KBM-7 (cell line): ENCODE measurements at regions of chr17 and their contacts with region 1.

Region 1: DNA sequence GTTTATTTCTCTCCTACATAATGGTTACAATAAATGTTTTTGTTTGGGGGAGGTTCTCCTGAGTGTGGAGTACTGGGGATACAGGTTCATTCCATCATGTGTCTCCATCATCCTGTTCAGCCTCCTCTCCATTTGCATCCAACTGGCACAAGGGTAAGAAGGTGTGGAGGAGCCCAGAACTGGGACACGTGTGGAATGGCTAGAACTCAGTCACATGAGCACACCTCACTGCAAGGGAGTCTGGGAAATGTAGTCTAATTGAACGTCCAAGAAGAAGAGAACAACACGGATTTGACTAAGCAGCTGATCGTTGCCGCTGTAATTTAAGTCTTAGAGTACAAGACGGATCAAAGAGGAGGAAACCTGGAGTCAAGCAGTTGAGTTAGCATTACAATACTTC is 6.1 kb downstream of the OR1A1 start:
- DNase-seq: no peak

Region 2: GRCh38 chr17:2909175-2909845 is 304.3 kb before region 1 on chr17:
- in situ Hi-C with region 1: no loop called
- DNase-seq: no peak

Region 3: GRCh38 chr17:3127451-3127850 is 86.1 kb before region 1 on chr17 and contains the start of gene OR1G1:
- in situ Hi-C with region 1: no loop called
- DNase-seq: no peak

Region 4: GRCh38 chr17:3318336-3318735 is 104.7 kb after region 1 on chr17:
- in situ Hi-C with region 1: loop called (anchors 25 kb)
- DNase-seq: no peak

Region 5: DNA sequence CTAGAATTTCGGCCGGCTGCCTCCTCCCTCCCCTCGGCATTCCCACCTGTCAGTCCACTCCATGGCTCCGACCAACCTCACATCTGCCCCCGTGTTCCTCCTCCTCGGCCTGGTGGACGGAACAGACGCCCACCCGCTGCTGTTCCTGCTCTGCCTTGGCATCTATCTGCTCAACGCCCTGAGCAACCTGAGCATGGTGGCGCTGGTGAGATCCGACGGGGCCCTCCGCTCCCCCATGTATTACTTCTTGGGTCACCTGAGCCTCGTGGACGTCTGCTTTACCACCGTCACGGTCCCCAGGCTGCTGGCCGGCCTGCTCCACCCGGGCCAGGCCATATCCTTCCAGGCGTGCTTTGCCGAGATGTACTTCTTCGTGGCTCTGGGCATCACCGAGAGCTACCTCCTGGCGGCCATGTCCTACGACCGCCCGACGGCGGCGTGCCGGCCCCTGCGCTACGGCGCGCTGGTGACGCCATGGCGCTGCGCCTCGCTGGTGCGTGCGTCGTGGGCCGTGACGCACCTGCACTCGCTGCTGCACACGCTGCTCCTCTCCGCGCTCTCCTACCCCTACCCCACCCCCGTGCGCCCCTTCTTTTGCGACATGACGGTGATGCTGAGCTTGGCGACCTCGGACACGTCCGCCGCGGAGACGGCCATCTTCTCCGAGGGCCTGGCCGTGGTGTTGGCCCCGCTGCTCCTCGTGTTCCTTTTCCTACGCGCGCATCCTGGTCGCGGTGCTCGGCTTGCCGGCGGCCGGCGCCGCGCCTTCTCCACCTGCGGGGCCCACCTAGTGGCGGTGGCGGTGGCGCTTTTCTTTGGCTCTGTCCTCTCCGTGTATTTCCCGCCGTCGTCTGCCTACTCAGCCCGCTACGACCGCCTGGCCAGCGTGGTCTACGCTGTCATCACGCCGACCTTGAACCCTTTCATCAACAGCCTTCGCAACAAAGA is 172.6 kb after region 1 on chr17 and contains the start of gene OR3A2:
- in situ Hi-C with region 1: no loop called
- DNase-seq: no peak